ENCODE measurements at regions of chr5 and their contacts with region 1.

Region 1: DNA sequence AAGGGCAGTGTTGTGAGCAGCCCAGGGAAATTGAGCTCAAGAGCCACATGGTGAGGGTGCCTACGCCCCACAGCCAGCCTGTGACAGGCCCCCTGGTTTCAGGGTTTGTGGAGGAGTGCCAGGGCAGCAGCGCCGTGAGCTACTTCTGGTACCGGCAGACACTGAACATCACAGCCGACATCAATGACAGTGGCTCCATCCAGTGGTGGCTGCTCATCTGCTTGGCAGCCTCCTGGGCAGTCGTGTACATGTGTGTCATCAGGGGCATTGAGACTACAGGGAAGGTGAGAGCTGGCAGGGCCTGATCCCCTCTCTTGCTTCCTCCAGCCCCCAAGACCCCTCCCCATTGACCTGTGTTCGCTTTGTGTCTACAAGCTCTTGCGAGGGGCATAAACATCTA is 10.2 kb downstream of the SLC6A18 start:
- DNase-seq: peak; percentile 16
- H3K4me3 ChIP-seq: no peak overlapping the region
- H3K27ac ChIP-seq: no peak overlapping the region
- H3K4me1 ChIP-seq: no peaks in the 10 kb centered on the region
- H3K27me3 ChIP-seq: no peaks in the 10 kb centered on the region
- CTCF ChIP-seq: 0 out of 2 replicates have a peak, but pooled peaks have one; percentile 36

Region 2: GRCh38 chr5:997001-997474 is 238.3 kb before region 1 on chr5:
- CTCF ChIA-PET with region 1: no interaction called
- POLR2A ChIA-PET with region 1: no interaction called
- intact Hi-C with region 1: no loop called
- DNase-seq: peak; percentile 88
- H3K4me3 ChIP-seq: peak overlapping the region; percentile 34
- H3K27ac ChIP-seq: peak overlapping the region; percentile 55
- H3K4me1 ChIP-seq: peaks cover 19% of the 10 kb centered on the region
- H3K27me3 ChIP-seq: no peaks in the 10 kb centered on the region
- CTCF ChIP-seq: no peak

Region 3: DNA sequence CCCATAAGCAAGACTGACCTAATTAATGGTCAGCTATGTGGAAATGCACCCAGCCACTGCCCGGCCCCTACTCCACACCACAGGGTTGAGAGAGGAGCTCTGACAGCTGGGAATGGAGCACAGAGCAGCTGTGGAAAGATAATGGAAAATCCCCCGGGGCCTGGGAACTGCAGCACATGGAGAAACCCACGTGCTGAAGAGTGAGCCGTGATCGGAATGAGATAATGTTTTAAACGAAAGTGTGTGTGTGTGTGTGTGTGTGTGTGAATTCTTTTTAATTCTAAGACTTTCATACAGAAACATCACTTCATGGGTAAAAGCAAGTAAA is 110.4 kb before region 1 on chr5:
- CTCF ChIA-PET with region 1: no interaction called
- POLR2A ChIA-PET with region 1: interaction called, 16 read pairs
- intact Hi-C with region 1: no loop called
- DNase-seq: peak; percentile 46
- H3K4me3 ChIP-seq: no peak overlapping the region
- H3K27ac ChIP-seq: no peak overlapping the region
- H3K4me1 ChIP-seq: no peaks in the 10 kb centered on the region
- H3K27me3 ChIP-seq: no peaks in the 10 kb centered on the region
- CTCF ChIP-seq: no peak

Measured in A673 (cell line).